Sciatic nerve (tissue), 2 donors: ENCODE measurements at regions of chr7 and their contacts with region 1.

Region 1: GRCh38 chr7:49060743-49061142 is 136.4 kb downstream of the CDC14C start:
- DNase-seq: no peak
- ATAC-seq: no peak

Region 2: GRCh38 chr7:48285373-48285772 is 775.4 kb before region 1 on chr7:
- intact Hi-C with region 1: loop called (anchors 5 kb)
- DNase-seq: no peak
- ATAC-seq: no peak